Gastrocnemius medialis (tissue), 4 donors: ENCODE measurements at regions of chr7 and their contacts with region 1.

Region 1: GRCh38 chr7:70654979-70655378 is 477.0 kb upstream of the GALNT17 start:
- DNase-seq: peak in 1 of 2 donors; percentile 35
- ATAC-seq: no peak
- H3K4me3 ChIP-seq: no peak overlapping the region
- H3K27ac ChIP-seq: no peak overlapping the region
- H3K4me1 ChIP-seq: peaks cover 32 to 33% of the 10 kb centered on the region in 2 donors
- H3K27me3 ChIP-seq: no peaks in the 10 kb centered on the region
- CTCF ChIP-seq: no peak
- POLR2A ChIP-seq: no peak

Region 2: DNA sequence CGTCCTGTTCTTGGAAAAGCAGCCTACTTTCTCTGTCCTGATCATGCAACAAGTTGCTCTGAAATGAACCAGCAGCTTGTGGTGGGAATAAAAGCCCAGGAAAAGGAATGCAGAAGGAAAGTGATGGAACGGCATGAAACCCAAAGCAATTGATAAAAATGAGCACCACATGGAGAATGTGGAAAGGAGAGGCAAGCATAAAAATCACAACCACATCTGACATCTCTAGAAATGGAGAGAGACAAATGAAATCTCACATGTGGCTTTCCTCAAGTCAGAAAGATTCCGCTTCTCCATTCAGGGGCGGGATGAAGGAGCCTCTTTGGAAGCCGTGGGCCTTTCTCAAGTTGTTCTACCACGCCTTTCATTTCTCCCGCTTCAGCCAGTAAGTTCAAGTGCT is 154.7 kb before region 1 on chr7:
- in situ Hi-C with region 1: no loop called
- intact Hi-C with region 1: loop called (anchors 5 kb)
- DNase-seq: no peak
- ATAC-seq: no peak
- H3K4me3 ChIP-seq: no peak overlapping the region
- H3K27ac ChIP-seq: no peak overlapping the region
- H3K4me1 ChIP-seq: peaks cover 3 to 6% of the 10 kb centered on the region in 2 donors
- H3K27me3 ChIP-seq: no peaks in the 10 kb centered on the region
- CTCF ChIP-seq: no peak
- POLR2A ChIP-seq: no peak

Region 3: DNA sequence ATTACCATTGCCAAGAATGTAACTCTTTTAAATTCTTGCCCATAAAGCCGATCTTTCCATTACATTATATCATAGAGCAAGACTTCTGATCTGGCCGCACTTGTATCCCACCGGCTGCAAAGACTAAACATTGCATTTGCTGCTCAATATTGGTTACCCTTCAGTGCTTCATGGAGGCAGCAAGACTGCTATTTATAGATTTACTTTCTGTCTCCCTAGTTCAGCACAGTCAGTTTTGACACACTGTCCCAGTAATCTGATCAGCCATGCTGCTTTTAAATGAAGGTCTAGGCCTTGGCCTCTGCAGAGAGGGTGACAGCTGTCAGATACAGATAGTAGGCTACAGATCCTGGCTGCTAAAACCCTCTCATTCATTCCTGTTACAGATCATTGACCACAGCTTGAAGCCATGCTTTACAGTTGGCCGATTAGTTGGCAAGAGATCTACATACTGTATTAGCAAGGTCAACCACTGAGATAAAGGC is 85.6 kb before region 1 on chr7:
- in situ Hi-C with region 1: no loop called
- intact Hi-C with region 1: loop called (anchors 1 kb)
- DNase-seq: peak; percentile 53 to 77
- ATAC-seq: peak; percentile 94 to 95
- H3K4me3 ChIP-seq: peak overlapping the region in 1 of 4 donors; percentile 23
- H3K27ac ChIP-seq: peak overlapping the region; percentile 82 to 88 (median 85)
- H3K4me1 ChIP-seq: peaks cover 20 to 24% of the 10 kb centered on the region in 2 donors
- H3K27me3 ChIP-seq: no peaks in the 10 kb centered on the region
- CTCF ChIP-seq: no peak
- POLR2A ChIP-seq: no peak

Region 4: DNA sequence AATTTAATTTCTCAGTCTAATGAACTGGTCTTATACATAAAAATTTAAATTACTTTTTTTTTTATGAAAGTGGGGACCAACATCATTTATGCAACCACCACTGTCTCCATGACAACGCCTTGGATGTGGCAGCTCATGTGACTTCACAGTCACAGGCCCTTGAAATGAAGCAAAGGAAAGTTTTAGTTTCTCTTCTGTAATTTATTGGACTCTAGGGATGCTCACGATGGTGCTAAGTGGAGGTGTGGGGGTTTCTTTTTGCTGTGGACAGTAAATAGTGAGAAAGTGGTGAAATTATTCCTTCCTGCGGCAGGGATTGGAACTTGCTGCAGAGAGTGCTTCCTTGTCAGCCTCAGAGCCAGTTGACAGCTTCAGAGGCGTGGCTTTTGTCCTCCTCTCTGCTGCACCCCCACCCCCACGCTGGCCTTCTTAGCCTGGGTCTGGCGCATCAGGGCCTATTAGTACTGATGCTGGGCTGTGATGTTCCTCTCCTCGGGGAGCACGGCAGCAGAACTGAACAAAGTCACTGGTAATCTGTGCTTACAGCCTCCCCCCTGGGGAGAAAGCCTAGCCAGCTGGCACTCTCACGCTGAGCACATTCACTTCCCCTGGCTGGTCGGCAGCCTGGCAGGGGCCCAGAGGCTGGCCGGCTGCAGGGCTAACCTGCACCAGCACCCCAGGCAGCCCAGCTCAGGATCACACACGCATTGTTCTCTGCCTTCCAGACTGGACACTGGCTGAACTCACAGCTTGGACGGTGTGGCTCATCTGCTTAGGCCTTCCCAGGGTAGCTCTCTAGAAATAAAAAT is 40.5 kb before region 1 on chr7:
- in situ Hi-C with region 1: no loop called
- intact Hi-C with region 1: loop called (anchors 5 kb)
- DNase-seq: peak; percentile 45 to 79
- ATAC-seq: peak; percentile 77 to 83
- H3K4me3 ChIP-seq: no peak overlapping the region
- H3K27ac ChIP-seq: peak overlapping the region in 3 of 4 donors; percentile 0 to 50 (median 2)
- H3K4me1 ChIP-seq: peaks cover 12% of the 10 kb centered on the region in 2 donors
- H3K27me3 ChIP-seq: no peaks in the 10 kb centered on the region
- CTCF ChIP-seq: no peak
- POLR2A ChIP-seq: no peak

Region 5: GRCh38 chr7:70710011-70710480 is 55.1 kb after region 1 on chr7:
- in situ Hi-C with region 1: no loop called
- intact Hi-C with region 1: loop called (anchors 1 kb)
- DNase-seq: peak in 1 of 2 donors; percentile 44
- ATAC-seq: peak; percentile 71 to 77
- H3K4me3 ChIP-seq: no peak overlapping the region
- H3K27ac ChIP-seq: peak overlapping the region; percentile 47 to 82 (median 68)
- H3K4me1 ChIP-seq: peaks cover 35 to 62% of the 10 kb centered on the region in 2 donors
- H3K27me3 ChIP-seq: no peaks in the 10 kb centered on the region
- CTCF ChIP-seq: no peak
- POLR2A ChIP-seq: no peak

Region 6: GRCh38 chr7:70728872-70729552 is 74.0 kb after region 1 on chr7:
- in situ Hi-C with region 1: no loop called
- intact Hi-C with region 1: no loop called
- DNase-seq: no peak
- ATAC-seq: no peak
- H3K4me3 ChIP-seq: no peak overlapping the region
- H3K27ac ChIP-seq: no peak overlapping the region
- H3K4me1 ChIP-seq: peaks cover 9 to 10% of the 10 kb centered on the region in 2 donors
- H3K27me3 ChIP-seq: no peaks in the 10 kb centered on the region
- CTCF ChIP-seq: no peak
- POLR2A ChIP-seq: no peak